ENCODE measurements at regions of chr17 and their contacts with region 1.

Region 1: DNA sequence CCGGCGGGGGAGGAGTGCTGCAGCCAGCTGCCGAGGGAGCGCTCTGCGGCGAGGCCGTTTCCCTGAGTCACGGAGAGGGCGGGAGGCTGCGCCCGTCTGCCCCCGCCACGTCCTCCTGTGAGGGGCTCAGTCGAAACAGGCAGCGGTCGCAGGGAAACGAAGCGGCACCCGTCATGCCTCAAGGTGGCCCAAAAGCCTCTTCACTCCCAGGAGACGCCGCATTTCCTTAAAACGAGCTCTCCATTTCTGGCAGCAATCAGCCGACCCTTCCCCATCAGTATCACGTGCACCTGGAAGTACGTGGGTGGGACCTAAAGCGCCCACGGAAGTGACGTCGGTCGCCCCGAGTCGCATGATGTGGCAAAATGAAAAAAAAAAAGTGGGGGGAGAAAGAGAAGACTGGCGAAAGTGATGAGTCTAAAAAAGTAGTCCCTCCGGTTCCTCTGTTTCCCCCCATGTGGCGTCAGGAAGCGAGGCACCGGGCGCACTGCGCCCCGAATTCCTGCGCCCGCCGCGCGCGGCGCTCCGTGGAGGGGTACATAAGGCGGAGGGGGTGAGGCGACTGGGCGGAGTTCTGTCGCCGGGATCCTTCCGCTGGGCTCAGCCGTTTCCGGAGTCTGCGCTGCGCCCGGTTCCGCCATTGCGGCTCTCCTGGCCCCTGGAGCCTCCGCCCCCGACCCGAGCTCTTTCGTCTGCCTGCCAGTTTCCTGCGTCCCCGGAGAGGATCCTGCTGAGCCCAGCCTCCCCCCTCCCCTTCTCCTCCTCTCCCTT is at the start of gene CLTC:
- DNase-seq: peak; percentile 92 to 96
- ATAC-seq: peak; percentile 91 to 94 (median 92)
- H3K4me3 ChIP-seq: peak within 1 kb of the TSS; percentile 85
- H3K27ac ChIP-seq: peak within 1 kb of the TSS; percentile 98
- H3K4me1 ChIP-seq: peaks cover 37% of the 10 kb centered on the region
- H3K27me3 ChIP-seq: no peaks in the 10 kb centered on the region
- CTCF ChIP-seq: no peak
- total RNA-seq, gene CLTC: 92.4 to 156 (median 128) TPM

Region 2: GRCh38 chr17:59565171-59565969 is 54.1 kb before region 1 on chr17 and contains the start of gene DHX40:
- intact Hi-C with region 1: loop called in 1 of 2 experiments (anchors 10 kb)
- DNase-seq: peak; percentile 94 to 97
- ATAC-seq: peak; percentile 98 to 99 (median 99)
- H3K4me3 ChIP-seq: peak within 1 kb of the TSS; percentile 74
- H3K27ac ChIP-seq: peak within 1 kb of the TSS; percentile 82
- H3K4me1 ChIP-seq: peaks cover 6% of the 10 kb centered on the region
- H3K27me3 ChIP-seq: no peaks in the 10 kb centered on the region
- CTCF ChIP-seq: no peak
- total RNA-seq, gene DHX40: 17.2 to 21.8 (median 20.1) TPM

Region 3: GRCh38 chr17:60361889-60362288 is 742.4 kb after region 1 on chr17:
- intact Hi-C with region 1: no loop called
- DNase-seq: no peak
- ATAC-seq: no peak
- H3K4me3 ChIP-seq: no peak overlapping the region
- H3K27ac ChIP-seq: no peak overlapping the region
- H3K4me1 ChIP-seq: peaks cover 11% of the 10 kb centered on the region
- H3K27me3 ChIP-seq: no peaks in the 10 kb centered on the region
- CTCF ChIP-seq: no peak

Measured in psoas muscle (tissue), 8 donors.